ENCODE measurements at regions of chr17 and their contacts with region 1.

Region 1: GRCh38 chr17:79839363-79840268 is at the start of gene CBX4:
- DNase-seq: peak; percentile 84 to 95
- ATAC-seq: peak; percentile 73 to 89 (median 81)
- H3K4me3 ChIP-seq: peak within 1 kb of the TSS; percentile 82
- H3K4me3 Mint-ChIP-seq: peak within 1 kb of the TSS; percentile 94
- H3K27ac ChIP-seq: peak within 1 kb of the TSS; percentile 67
- H3K27ac Mint-ChIP-seq: peak within 1 kb of the TSS; percentile 87 to 96
- H3K4me1 ChIP-seq: peaks cover 79% of the 10 kb centered on the region
- H3K4me1 Mint-ChIP-seq: peaks cover 35 to 57% of the 10 kb centered on the region in 2 donors
- H3K27me3 ChIP-seq: peaks cover 36% of the 10 kb centered on the region
- H3K27me3 Mint-ChIP-seq: peaks cover 12 to 21% of the 10 kb centered on the region in 2 donors
- CTCF ChIP-seq: peak; percentile 62
- total RNA-seq, gene CBX4: 147 to 220 (median 217) TPM

Region 2: DNA sequence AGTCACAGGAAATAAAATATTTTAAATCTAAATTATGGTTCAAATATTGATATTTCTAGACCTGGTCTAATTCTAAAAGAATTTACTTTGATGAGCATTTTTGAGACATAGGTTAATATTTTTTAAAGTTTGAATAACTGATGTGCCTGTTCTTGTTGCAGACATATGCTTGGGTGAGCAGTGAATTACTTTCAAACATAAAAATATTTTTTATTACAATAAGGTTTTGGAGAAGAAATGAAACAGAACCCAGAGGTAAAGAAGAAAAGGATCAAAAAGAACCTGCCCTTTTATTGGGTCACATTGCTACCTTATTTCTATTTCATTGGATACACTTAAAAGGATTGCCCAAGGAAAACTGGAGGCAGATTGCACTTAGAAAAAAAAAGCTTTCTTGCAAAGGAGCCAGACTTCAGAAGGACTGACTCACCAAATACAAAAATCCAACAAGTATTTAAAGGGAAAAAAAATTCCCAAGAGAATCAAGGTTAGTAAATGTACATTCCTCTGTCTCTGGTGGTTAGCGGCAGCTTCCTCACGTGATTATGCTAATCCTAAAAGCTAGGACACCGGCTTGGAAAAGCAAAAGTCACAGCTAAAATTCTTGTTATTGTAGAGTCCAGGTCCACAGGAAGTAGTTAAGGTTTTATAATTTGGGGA is 90.3 kb before region 1 on chr17:
- intact Hi-C with region 1: loop called (anchors 5 kb)
- DNase-seq: no peak
- ATAC-seq: no peak
- H3K4me3 ChIP-seq: no peak overlapping the region
- H3K4me3 Mint-ChIP-seq: no peak overlapping the region
- H3K27ac ChIP-seq: no peak overlapping the region
- H3K27ac Mint-ChIP-seq: no peak overlapping the region
- H3K4me1 ChIP-seq: peaks cover 13% of the 10 kb centered on the region
- H3K4me1 Mint-ChIP-seq: peaks cover 7 to 12% of the 10 kb centered on the region in 2 donors
- H3K27me3 ChIP-seq: peaks cover 31% of the 10 kb centered on the region
- H3K27me3 Mint-ChIP-seq: peaks cover 19 to 22% of the 10 kb centered on the region in 2 donors
- CTCF ChIP-seq: no peak

Region 3: DNA sequence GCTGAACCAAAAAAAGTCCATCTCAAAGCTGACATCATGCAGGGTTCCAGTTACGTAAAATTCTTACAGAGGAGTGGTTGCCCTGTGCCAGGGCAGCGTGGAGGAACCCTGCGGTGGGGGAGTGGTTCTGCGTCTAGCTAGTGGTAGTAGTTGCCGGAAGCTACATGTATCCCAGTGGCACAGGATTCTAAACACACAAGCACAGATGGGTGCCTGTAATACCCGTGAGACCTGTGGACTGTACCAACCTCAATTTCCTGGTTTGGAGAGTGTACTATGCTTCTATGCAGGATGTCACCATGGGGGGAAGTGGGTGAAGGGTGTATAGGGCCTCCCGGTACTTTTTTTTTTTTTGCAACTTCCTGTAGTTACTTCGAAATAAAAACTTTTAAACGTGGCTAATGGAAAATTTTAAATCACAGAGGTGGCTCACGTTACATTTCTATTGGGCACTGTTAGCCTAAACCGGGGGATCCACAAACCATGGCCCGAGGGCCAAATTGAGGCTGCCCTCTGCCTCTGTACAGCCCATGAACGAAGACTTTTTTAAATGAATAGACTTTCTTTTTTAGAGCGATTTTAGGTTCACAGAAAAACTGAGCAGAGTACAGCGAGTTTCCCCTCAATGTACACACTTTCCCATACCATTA is 157.5 kb after region 1 on chr17:
- intact Hi-C with region 1: loop called (anchors 2 kb)
- DNase-seq: peak; percentile 55 to 95
- ATAC-seq: peak; percentile 93 to 99 (median 94)
- H3K4me3 ChIP-seq: no peak overlapping the region
- H3K4me3 Mint-ChIP-seq: peak overlapping the region; percentile 79
- H3K27ac ChIP-seq: peak overlapping the region; percentile 87
- H3K27ac Mint-ChIP-seq: peak overlapping the region; percentile 91 to 93
- H3K4me1 ChIP-seq: peaks cover 53% of the 10 kb centered on the region
- H3K4me1 Mint-ChIP-seq: peaks cover 30 to 34% of the 10 kb centered on the region in 2 donors
- H3K27me3 ChIP-seq: peaks cover 6% of the 10 kb centered on the region
- H3K27me3 Mint-ChIP-seq: peaks cover 8 to 11% of the 10 kb centered on the region in 2 donors
- CTCF ChIP-seq: no peak

Measured in natural killer cell (primary cell).